K562 (cell line): ENCODE measurements at regions of chr15 and their contacts with region 1.

Region 1: DNA sequence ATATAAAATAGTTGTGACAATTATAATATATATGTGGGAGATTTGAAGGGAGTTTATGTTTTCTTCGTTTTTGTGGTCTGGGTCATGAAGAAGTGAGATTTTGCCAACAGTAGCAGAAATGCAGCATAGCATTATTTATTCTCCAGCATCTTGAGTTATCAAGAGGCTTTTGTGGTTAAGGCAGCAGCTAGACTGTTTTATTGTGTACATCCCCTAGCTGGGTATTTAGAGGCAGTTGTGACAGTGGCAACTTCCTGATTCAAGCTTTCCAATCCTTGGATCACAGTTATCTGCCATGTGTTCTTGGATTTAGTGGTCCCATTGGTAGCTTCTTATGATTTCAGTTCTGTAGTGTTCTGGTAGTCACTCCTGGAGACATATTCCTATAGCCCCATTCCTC is 29.0 kb downstream of the ARIH1 start:
- DNase-seq: no peak
- ATAC-seq: no peak
- H3K4me3 ChIP-seq: no peak overlapping the region
- H3K27ac ChIP-seq: no peak overlapping the region
- H3K4me1 ChIP-seq: no peaks in the 10 kb centered on the region
- H3K27me3 ChIP-seq: no peaks in the 10 kb centered on the region
- CTCF ChIP-seq: no peak
- EP300 ChIP-seq: no peak
- POLR2A ChIP-seq: no peak
- RAD21 ChIP-seq: no peak

Region 2: GRCh38 chr15:72491768-72492167 is 11.4 kb before region 1 on chr15:
- CTCF ChIA-PET with region 1: no interaction called
- POLR2A ChIA-PET with region 1: interaction called, 14 read pairs
- in situ Hi-C with region 1: no loop called
- intact Hi-C with region 1: no loop called
- DNase-seq: no peak
- ATAC-seq: peak; percentile 26; the same call in 1 of the 3 replicates
- H3K4me3 ChIP-seq: no peak overlapping the region
- H3K27ac ChIP-seq: no peak overlapping the region
- H3K4me1 ChIP-seq: no peaks in the 10 kb centered on the region; a peak in 1 of 5 replicates
- H3K27me3 ChIP-seq: no peaks in the 10 kb centered on the region
- CTCF ChIP-seq: no peak
- EP300 ChIP-seq: no peak
- POLR2A ChIP-seq: no peak
- RAD21 ChIP-seq: no peak